Dorsolateral prefrontal cortex (tissue), 120 donors: ENCODE measurements at regions of chr10 and their contacts with region 1.

Region 1: DNA sequence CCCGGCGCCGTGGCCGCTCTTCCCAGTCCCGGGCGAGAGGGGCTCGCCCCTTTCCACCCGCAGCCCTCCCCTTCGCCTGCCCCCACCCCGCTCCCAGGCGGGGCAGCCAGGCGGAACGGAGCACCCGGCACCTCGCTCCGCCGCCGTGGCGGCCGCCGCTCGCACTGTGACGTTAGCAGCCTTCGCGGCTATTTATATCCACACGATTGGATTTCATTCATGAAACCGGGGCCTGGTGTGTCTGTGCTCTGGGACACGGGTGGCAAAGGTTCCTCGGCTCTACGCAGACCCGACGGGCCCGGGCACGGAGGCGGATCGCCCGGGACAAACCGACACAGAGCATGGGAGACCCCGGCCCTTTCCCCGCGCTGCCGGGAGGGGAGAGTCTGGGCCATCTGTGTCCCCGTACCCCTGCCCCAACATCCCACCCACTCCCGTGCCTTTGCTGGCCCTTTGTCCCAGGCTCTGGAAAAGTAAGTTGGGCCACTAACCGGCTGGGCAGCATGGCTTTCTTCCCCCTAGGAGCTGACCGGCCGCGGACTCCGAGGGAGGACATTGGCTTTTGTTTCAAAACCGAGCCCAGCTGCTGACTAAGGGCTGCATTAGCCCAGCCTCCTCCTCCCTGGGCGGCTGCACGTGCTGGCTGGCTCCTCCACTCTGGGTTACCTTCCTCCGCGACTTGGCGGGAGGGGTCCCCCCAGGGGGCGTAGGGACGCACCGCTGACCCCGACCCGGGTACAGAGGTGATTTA is at the start of gene RHOBTB1:
- DNase-seq: peak; percentile 14 to 86 (median 75)
- H3K4me3 ChIP-seq: peak within 1 kb of the TSS; percentile 63 to 95 (median 85)
- H3K27ac ChIP-seq: peak within 1 kb of the TSS; percentile 93 to 100 (median 99)
- H3K27me3 ChIP-seq: no peaks in the 10 kb centered on the region
- CTCF ChIP-seq: peak in 7 of 56 donors; percentile 3 to 27 (median 6)
- total RNA-seq, gene RHOBTB1: 6.6 to 36.7 (median 15.0) TPM

Region 2: GRCh38 chr10:60901561-60902235 is 42.6 kb before region 1 on chr10:
- intact Hi-C with region 1: loop called in 1 of 2 experiments (anchors 5 kb)
- DNase-seq: peak in 8 of 10 donors; percentile 31 to 71 (median 66)
- H3K4me3 ChIP-seq: no peak overlapping the region
- H3K27ac ChIP-seq: peak overlapping the region in 56 of 59 donors; percentile 4 to 82 (median 58)
- H3K27me3 ChIP-seq: no peaks in the 10 kb centered on the region
- CTCF ChIP-seq: no peak

Region 3: GRCh38 chr10:60955957-60956425 is 11.7 kb after region 1 on chr10:
- intact Hi-C with region 1: loop called in 1 of 2 experiments (anchors 2 kb)
- DNase-seq: no peak
- H3K4me3 ChIP-seq: no peak overlapping the region
- H3K27ac ChIP-seq: peak overlapping the region in 2 of 59 donors; percentile 17 to 37
- H3K27me3 ChIP-seq: no peaks in the 10 kb centered on the region
- CTCF ChIP-seq: no peak